ENCODE measurements at regions of chr14 and their contacts with region 1.

Region 1: GRCh38 chr14:94136575-94137331 is 7.3 kb upstream of the IFI27L2 start:
- DNase-seq: peak; percentile 70 to 90 (median 83)
- ATAC-seq: peak; percentile 95
- H3K4me3 ChIP-seq: no peak overlapping the region
- H3K4me3 Mint-ChIP-seq: no peak overlapping the region
- H3K27ac ChIP-seq: no peak overlapping the region
- H3K27ac Mint-ChIP-seq: no peak overlapping the region
- H3K4me1 ChIP-seq: peaks cover 4% of the 10 kb centered on the region
- H3K4me1 Mint-ChIP-seq: no peaks in the 10 kb centered on the region
- H3K27me3 ChIP-seq: peaks cover 0 to 3% of the 10 kb centered on the region in 2 experiments
- H3K27me3 Mint-ChIP-seq: peaks cover 10% of the 10 kb centered on the region
- CTCF ChIP-seq: peak; percentile 91

Region 2: DNA sequence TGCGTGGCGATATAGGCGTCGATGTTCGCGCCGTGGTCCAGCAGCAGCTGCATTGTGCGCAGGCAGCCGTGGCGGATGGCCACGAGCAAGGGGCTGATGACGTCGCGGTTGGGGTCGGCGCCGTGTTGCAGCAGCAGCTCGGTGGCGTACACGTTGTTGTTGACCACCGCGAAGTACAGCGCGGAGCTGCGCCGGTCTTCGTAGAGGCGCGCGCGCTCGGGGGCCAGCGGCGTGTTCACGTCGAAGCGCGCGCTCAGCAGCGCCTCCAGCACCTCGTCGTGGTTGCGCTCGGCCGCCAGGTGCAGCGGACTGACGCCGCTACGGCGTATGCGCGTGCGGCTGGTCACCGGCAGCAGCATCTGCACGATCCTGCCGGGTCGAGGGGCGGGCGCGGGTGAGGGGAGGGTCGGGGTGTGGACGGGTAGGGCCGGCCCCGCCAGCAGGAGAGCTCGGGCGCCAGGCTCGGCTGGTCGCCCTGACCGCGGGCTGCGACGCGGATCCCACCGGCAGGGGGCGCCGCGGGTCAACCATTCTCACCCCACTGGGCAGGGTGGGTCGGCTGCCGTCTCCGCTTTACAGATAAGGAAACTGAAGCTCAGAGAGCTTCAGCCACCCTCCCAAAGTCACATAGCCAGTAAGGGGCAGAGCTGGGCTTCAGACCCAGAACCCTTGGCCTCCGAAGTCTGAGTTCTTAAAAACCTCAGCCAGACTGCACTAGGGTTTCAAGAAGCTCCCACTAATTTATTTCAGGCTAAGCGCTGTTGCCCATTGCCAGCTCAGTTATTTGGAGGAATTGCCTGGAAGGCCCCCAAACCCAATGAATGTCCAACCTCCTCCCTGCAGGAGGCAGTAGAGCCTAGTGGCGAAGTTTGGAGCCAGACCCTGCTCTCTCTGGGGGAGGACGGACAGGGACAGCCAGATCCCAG is 197.2 kb before region 1 on chr14:
- CTCF ChIA-PET with region 1: interaction called, 5 read pairs
- POLR2A ChIA-PET with region 1: no interaction called
- intact Hi-C with region 1: loop called (anchors 1 to 2 kb)
- DNase-seq: peak; percentile 75 to 95 (median 90)
- ATAC-seq: peak; percentile 91
- H3K4me3 ChIP-seq: peak overlapping the region; percentile 44
- H3K4me3 Mint-ChIP-seq: peak overlapping the region; percentile 68
- H3K27ac ChIP-seq: no peak overlapping the region
- H3K27ac Mint-ChIP-seq: no peak overlapping the region
- H3K4me1 ChIP-seq: peaks cover 15% of the 10 kb centered on the region
- H3K4me1 Mint-ChIP-seq: no peaks in the 10 kb centered on the region
- H3K27me3 ChIP-seq: peaks cover 0 to 7% of the 10 kb centered on the region in 2 experiments
- H3K27me3 Mint-ChIP-seq: peaks cover 9% of the 10 kb centered on the region
- CTCF ChIP-seq: peak; percentile 99

Region 3: GRCh38 chr14:94080471-94081289 is 56.1 kb before region 1 on chr14 and contains the start of gene DDX24:
- CTCF ChIA-PET with region 1: interaction called, 10 read pairs
- POLR2A ChIA-PET with region 1: interaction called, 33 read pairs
- intact Hi-C with region 1: loop called in 1 of 2 experiments (anchors 2 kb)
- DNase-seq: peak; percentile 93 to 99 (median 96)
- ATAC-seq: peak; percentile 92
- H3K4me3 ChIP-seq: peak within 1 kb of the TSS; percentile 98
- H3K4me3 Mint-ChIP-seq: peak within 1 kb of the TSS; percentile 99
- H3K27ac ChIP-seq: peak within 1 kb of the TSS; percentile 93
- H3K27ac Mint-ChIP-seq: peak within 1 kb of the TSS; percentile 97
- H3K4me1 ChIP-seq: peaks cover 31% of the 10 kb centered on the region
- H3K4me1 Mint-ChIP-seq: peaks cover 63% of the 10 kb centered on the region
- H3K27me3 ChIP-seq: no peaks in the 10 kb centered on the region
- H3K27me3 Mint-ChIP-seq: no peaks in the 10 kb centered on the region
- CTCF ChIP-seq: no peak
- total RNA-seq, gene DDX24: 678 to 711 TPM

Region 4: DNA sequence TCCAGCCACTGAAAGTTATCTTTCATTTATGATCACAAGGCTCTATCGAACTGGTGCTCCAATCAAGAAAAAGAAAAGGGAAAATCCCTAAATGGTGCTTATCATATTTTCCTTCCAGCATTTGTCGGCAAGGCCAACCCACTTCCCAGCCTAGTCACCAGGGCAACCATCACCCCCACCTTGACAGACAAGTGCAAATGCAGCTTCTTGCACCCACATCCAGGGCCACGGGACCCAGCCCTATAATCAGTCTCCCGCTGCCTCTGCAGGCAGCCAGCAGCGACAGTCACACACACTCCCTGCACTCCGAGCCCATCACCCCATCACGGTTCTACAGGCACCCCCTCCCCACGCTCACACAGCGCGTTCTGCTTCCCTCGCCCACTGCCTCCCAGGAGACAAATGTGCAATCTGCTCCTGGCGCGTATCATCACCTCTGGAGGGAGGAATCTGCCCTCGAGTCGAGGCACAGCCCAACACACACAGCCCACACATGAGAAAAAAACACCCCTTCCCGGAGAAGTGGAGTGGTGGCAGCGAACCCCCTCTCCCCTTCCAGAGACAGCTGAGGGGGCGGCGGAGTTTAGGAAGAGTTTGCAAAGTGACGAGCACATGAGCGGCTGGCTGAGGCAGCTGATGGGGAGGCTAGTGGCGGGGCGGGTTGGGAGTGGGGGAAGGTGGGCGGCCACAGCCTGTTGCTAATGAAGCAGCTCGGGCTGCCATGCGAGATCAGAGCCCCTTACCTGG is 28.1 kb after region 1 on chr14:
- CTCF ChIA-PET with region 1: interaction called, 11 read pairs
- POLR2A ChIA-PET with region 1: interaction called, 13 read pairs
- intact Hi-C with region 1: no loop called
- DNase-seq: no peak
- ATAC-seq: no peak
- H3K4me3 ChIP-seq: no peak overlapping the region
- H3K4me3 Mint-ChIP-seq: no peak overlapping the region
- H3K27ac ChIP-seq: no peak overlapping the region
- H3K27ac Mint-ChIP-seq: no peak overlapping the region
- H3K4me1 ChIP-seq: peaks cover 42% of the 10 kb centered on the region
- H3K4me1 Mint-ChIP-seq: peaks cover 44% of the 10 kb centered on the region
- H3K27me3 ChIP-seq: no peaks in the 10 kb centered on the region
- H3K27me3 Mint-ChIP-seq: no peaks in the 10 kb centered on the region
- CTCF ChIP-seq: no peak

Region 5: DNA sequence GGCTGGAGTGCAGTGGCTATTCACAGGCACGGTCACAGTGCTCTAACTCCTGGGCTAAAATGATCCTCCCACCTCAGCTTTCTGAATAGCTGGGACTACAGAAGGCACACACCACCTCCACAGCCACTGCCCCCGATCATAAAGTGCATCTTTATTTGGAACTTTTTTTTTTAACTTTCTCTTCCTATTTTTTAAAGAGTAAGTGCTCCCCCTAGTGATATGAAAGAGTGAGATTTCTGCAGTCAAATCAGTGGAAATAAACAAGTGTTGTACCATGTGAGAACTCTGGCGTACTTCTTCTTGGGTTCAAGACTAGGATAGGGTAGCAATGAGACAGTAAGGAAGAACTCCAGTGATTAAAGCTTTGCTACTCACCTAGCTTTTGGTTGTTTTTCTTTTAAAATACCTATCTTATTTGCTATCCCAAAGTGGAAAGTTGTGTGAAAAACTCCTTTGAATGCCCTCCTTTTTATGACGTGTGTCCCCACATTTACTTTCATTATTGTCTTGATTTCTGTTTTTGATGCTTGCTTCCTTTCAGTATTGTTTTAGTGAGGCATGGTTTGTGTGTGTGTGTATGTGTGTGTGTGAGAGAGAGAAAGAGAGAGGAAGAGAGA is 44.0 kb after region 1 on chr14:
- CTCF ChIA-PET with region 1: interaction called, 45 read pairs
- POLR2A ChIA-PET with region 1: interaction called, 9 read pairs
- intact Hi-C with region 1: loop called (anchors 1 kb)
- DNase-seq: peak in 4 of 14 experiments; percentile 25 to 80 (median 77)
- ATAC-seq: peak; percentile 86
- H3K4me3 ChIP-seq: peak overlapping the region; percentile 11
- H3K4me3 Mint-ChIP-seq: peak overlapping the region; percentile 43
- H3K27ac ChIP-seq: no peak overlapping the region
- H3K27ac Mint-ChIP-seq: peak overlapping the region; percentile 71
- H3K4me1 ChIP-seq: peaks cover 3% of the 10 kb centered on the region
- H3K4me1 Mint-ChIP-seq: peaks cover 24% of the 10 kb centered on the region
- H3K27me3 ChIP-seq: no peaks in the 10 kb centered on the region
- H3K27me3 Mint-ChIP-seq: peaks cover 13% of the 10 kb centered on the region
- CTCF ChIP-seq: peak; percentile 71

Measured in CD4-positive, alpha-beta T cell (primary cell).